SK-N-SH (cell line): ENCODE measurements at regions of chr1 and their contacts with region 1.

Region 1: GRCh38 chr1:48061162-48062136 is 64.3 kb upstream of the TRABD2B start:
- DNase-seq: peak; percentile 69
- H3K4me3 ChIP-seq: no peak overlapping the region; a peak in 1 of 4 replicates
- H3K27ac ChIP-seq: no peak overlapping the region; a peak in 1 of 4 replicates
- H3K4me1 ChIP-seq: no peaks in the 10 kb centered on the region; a peak in 1 of 4 replicates
- H3K27me3 ChIP-seq: no peaks in the 10 kb centered on the region
- CTCF ChIP-seq: peak; percentile 76
- EP300 ChIP-seq: no peak
- RAD21 ChIP-seq: peak; percentile 86

Region 2: GRCh38 chr1:47432071-47433036 is 629.1 kb before region 1 on chr1:
- CTCF ChIA-PET with region 1: interaction called, 10 read pairs
- POLR2A ChIA-PET with region 1: no interaction called
- DNase-seq: peak; percentile 82
- H3K4me3 ChIP-seq: peak overlapping the region in 1 of 2 experiments; percentile 29; a peak in 2 of 4 replicates
- H3K27ac ChIP-seq: no peak overlapping the region
- H3K4me1 ChIP-seq: peaks cover 0 to 10% of the 10 kb centered on the region in 2 experiments; a peak in 1 of 4 replicates
- H3K27me3 ChIP-seq: peaks cover 37% of the 10 kb centered on the region; the same call in 1 of the 2 replicates
- CTCF ChIP-seq: peak; percentile 85
- EP300 ChIP-seq: no peak
- RAD21 ChIP-seq: peak; percentile 92

Region 3: GRCh38 chr1:47755101-47755990 is 306.1 kb before region 1 on chr1:
- CTCF ChIA-PET with region 1: interaction called, 10 read pairs
- POLR2A ChIA-PET with region 1: no interaction called
- DNase-seq: peak; percentile 44
- H3K4me3 ChIP-seq: no peak overlapping the region
- H3K27ac ChIP-seq: no peak overlapping the region
- H3K4me1 ChIP-seq: no peaks in the 10 kb centered on the region
- H3K27me3 ChIP-seq: no peaks in the 10 kb centered on the region
- CTCF ChIP-seq: peak; percentile 63
- EP300 ChIP-seq: no peak
- RAD21 ChIP-seq: peak; percentile 24; the same call in 1 of the 2 replicates

Region 4: DNA sequence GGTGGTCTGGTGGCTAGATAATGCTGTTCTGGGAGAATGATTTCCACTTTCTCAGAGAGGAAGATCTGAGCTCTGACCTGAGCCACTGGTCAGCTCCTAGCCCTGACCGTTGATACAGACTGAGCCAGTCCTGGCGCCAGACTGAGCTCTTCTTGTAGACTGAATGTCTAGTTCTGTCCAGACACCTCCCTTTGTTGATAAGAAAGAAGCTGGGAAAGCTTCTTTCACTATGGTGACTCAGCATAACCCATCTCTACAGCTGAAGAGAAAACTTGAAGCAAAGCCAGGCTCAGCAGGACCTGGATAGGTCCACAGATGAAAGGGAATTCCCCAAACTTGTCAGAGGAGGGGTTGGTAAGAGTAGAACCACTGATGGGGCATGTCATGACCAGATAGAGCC is 54.4 kb before region 1 on chr1:
- CTCF ChIA-PET with region 1: interaction called, 21 read pairs
- POLR2A ChIA-PET with region 1: no interaction called
- DNase-seq: no peak
- H3K4me3 ChIP-seq: no peak overlapping the region
- H3K27ac ChIP-seq: no peak overlapping the region
- H3K4me1 ChIP-seq: no peaks in the 10 kb centered on the region
- H3K27me3 ChIP-seq: no peaks in the 10 kb centered on the region
- CTCF ChIP-seq: no peak
- EP300 ChIP-seq: no peak
- RAD21 ChIP-seq: no peak

Region 5: DNA sequence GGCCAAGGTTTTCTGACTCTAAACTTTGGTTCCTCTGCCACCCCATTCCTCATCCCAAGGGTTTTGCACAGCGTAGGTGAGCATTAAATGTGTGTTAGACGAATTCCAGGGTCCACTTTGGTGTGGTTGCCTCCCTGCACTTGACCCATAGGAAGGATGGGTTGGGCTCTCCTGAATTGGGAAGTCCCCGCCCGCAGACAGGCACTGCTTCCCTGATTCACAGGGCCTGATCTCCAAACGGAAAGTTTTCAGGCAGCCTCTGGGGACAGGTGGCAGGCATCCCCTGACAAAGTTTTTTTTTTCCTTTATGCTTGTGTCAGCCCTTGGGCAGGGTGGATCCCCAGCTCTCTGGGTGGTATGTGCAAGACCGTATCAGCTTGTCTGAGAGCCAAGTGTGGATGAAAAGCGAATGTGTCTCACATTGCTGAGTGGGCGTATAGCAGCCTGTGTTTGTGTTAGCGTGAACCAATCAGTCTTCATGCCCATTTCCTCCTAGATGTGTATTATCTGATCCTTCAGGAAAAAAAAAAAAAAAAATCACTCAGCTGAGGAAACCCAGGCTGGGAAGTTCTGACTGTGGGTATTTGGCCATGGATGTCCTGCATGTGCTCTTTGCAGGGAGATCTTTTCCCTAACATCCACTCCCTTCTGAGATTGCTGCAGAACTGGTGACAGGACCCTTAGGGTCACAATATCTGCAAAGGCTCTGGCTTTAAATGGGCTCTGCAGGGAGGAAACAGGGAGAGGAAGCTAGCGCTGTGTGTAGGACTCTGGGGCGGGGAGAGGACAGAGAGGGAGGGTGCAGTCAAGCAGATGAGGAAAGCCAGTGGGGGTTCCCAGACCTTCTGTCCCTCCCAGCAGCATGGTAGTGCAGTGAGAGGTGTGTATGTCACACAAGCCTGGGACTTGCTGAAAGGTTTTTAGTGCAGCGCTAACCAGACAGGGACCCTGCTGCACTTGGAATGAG is 22.1 kb before region 1 on chr1:
- CTCF ChIA-PET with region 1: interaction called, 25 read pairs
- POLR2A ChIA-PET with region 1: no interaction called
- DNase-seq: no peak
- H3K4me3 ChIP-seq: no peak overlapping the region
- H3K27ac ChIP-seq: no peak overlapping the region
- H3K4me1 ChIP-seq: peaks cover 0 to 8% of the 10 kb centered on the region in 2 experiments; a peak in 1 of 4 replicates
- H3K27me3 ChIP-seq: no peaks in the 10 kb centered on the region
- CTCF ChIP-seq: no peak
- EP300 ChIP-seq: no peak
- RAD21 ChIP-seq: no peak

Region 6: GRCh38 chr1:48082271-48082962 is 21.0 kb after region 1 on chr1:
- CTCF ChIA-PET with region 1: interaction called, 25 read pairs
- POLR2A ChIA-PET with region 1: no interaction called
- DNase-seq: peak; percentile 65
- H3K4me3 ChIP-seq: no peak overlapping the region
- H3K27ac ChIP-seq: no peak overlapping the region
- H3K4me1 ChIP-seq: peaks cover 0 to 8% of the 10 kb centered on the region in 2 experiments; a peak in 1 of 4 replicates
- H3K27me3 ChIP-seq: no peaks in the 10 kb centered on the region; the same call in 1 of the 2 replicates
- CTCF ChIP-seq: no peak
- EP300 ChIP-seq: no peak
- RAD21 ChIP-seq: no peak

Region 7: GRCh38 chr1:48160486-48161132 is 99.2 kb after region 1 on chr1:
- CTCF ChIA-PET with region 1: no interaction called
- POLR2A ChIA-PET with region 1: no interaction called
- DNase-seq: no peak
- H3K4me3 ChIP-seq: no peak overlapping the region
- H3K27ac ChIP-seq: no peak overlapping the region
- H3K4me1 ChIP-seq: no peaks in the 10 kb centered on the region
- H3K27me3 ChIP-seq: no peaks in the 10 kb centered on the region
- CTCF ChIP-seq: no peak
- EP300 ChIP-seq: no peak
- RAD21 ChIP-seq: no peak